MCF 10A (cell line): ENCODE measurements at regions of chr3 and their contacts with region 1.

Region 1: GRCh38 chr3:192816351-192816750 is 89.0 kb upstream of the FGF12 start:
- DNase-seq: peak; percentile 65
- H3K4me3 Mint-ChIP-seq: no peak overlapping the region
- H3K27ac Mint-ChIP-seq: no peak overlapping the region
- H3K4me1 Mint-ChIP-seq: peaks cover 35% of the 10 kb centered on the region
- H3K27me3 Mint-ChIP-seq: no peaks in the 10 kb centered on the region
- CTCF ChIP-seq: peak; percentile 64

Region 2: GRCh38 chr3:192395506-192395905 is 420.8 kb before region 1 on chr3:
- CTCF ChIA-PET with region 1: no interaction called
- POLR2A ChIA-PET with region 1: no interaction called
- intact Hi-C with region 1: no loop called
- DNase-seq: peak; percentile 6
- H3K4me3 Mint-ChIP-seq: no peak overlapping the region
- H3K27ac Mint-ChIP-seq: no peak overlapping the region
- H3K4me1 Mint-ChIP-seq: no peaks in the 10 kb centered on the region
- H3K27me3 Mint-ChIP-seq: no peaks in the 10 kb centered on the region
- CTCF ChIP-seq: no peak

Region 3: GRCh38 chr3:192566706-192567290 is 249.6 kb before region 1 on chr3:
- CTCF ChIA-PET with region 1: interaction called, 27 read pairs
- POLR2A ChIA-PET with region 1: interaction called, 3 read pairs
- intact Hi-C with region 1: no loop called
- DNase-seq: peak; percentile 74
- H3K4me3 Mint-ChIP-seq: no peak overlapping the region
- H3K27ac Mint-ChIP-seq: no peak overlapping the region
- H3K4me1 Mint-ChIP-seq: no peaks in the 10 kb centered on the region
- H3K27me3 Mint-ChIP-seq: peaks cover 37% of the 10 kb centered on the region
- CTCF ChIP-seq: peak; percentile 78

Region 4: GRCh38 chr3:192887047-192887446 is 70.7 kb after region 1 on chr3:
- CTCF ChIA-PET with region 1: interaction called, 13 read pairs
- POLR2A ChIA-PET with region 1: no interaction called
- intact Hi-C with region 1: loop called (anchors 2 kb)
- DNase-seq: peak; percentile 57
- H3K4me3 Mint-ChIP-seq: peak overlapping the region; percentile 47
- H3K27ac Mint-ChIP-seq: peak overlapping the region; percentile 57
- H3K4me1 Mint-ChIP-seq: peaks cover 45% of the 10 kb centered on the region
- H3K27me3 Mint-ChIP-seq: no peaks in the 10 kb centered on the region
- CTCF ChIP-seq: no peak

Region 5: DNA sequence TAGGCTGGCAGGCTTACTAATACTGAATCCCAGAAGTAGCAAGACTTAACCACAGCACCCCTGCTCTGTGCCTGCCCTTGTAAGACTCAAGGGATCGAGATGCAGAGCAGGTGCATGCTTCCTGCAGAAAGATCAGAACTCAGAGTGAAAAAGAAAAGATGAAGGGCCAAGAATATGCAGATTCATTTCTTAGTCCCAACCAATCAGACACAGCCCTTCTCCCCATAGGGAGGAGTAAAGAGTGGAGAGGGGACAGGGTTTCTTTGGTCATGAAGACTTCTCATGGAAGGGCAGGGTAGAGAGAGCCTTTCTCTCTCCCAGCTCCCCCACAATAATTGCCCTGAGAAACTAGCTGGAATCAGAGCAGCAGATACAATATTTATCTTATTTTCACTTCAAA is 206.9 kb after region 1 on chr3:
- CTCF ChIA-PET with region 1: interaction called, 12 read pairs
- POLR2A ChIA-PET with region 1: no interaction called
- intact Hi-C with region 1: no loop called
- DNase-seq: no peak
- H3K4me3 Mint-ChIP-seq: no peak overlapping the region
- H3K27ac Mint-ChIP-seq: no peak overlapping the region
- H3K4me1 Mint-ChIP-seq: no peaks in the 10 kb centered on the region
- H3K27me3 Mint-ChIP-seq: no peaks in the 10 kb centered on the region
- CTCF ChIP-seq: no peak

Region 6: GRCh38 chr3:193078996-193079753 is 262.8 kb after region 1 on chr3:
- CTCF ChIA-PET with region 1: no interaction called
- POLR2A ChIA-PET with region 1: no interaction called
- intact Hi-C with region 1: no loop called
- DNase-seq: no peak
- H3K4me3 Mint-ChIP-seq: no peak overlapping the region
- H3K27ac Mint-ChIP-seq: no peak overlapping the region
- H3K4me1 Mint-ChIP-seq: no peaks in the 10 kb centered on the region
- H3K27me3 Mint-ChIP-seq: peaks cover 39% of the 10 kb centered on the region
- CTCF ChIP-seq: no peak

Region 7: GRCh38 chr3:193129601-193130000 is 313.2 kb after region 1 on chr3:
- CTCF ChIA-PET with region 1: interaction called, 26 read pairs
- POLR2A ChIA-PET with region 1: interaction called, 6 read pairs
- intact Hi-C with region 1: loop called (anchors 5 kb)
- DNase-seq: peak; percentile 34
- H3K4me3 Mint-ChIP-seq: no peak overlapping the region
- H3K27ac Mint-ChIP-seq: no peak overlapping the region
- H3K4me1 Mint-ChIP-seq: peaks cover 7% of the 10 kb centered on the region
- H3K27me3 Mint-ChIP-seq: peaks cover 56% of the 10 kb centered on the region
- CTCF ChIP-seq: no peak

Region 8: GRCh38 chr3:193465992-193466608 is 649.7 kb after region 1 on chr3:
- CTCF ChIA-PET with region 1: interaction called, 37 read pairs
- POLR2A ChIA-PET with region 1: interaction called, 3 read pairs
- intact Hi-C with region 1: loop called (anchors 1 kb)
- DNase-seq: no peak
- H3K4me3 Mint-ChIP-seq: no peak overlapping the region
- H3K27ac Mint-ChIP-seq: no peak overlapping the region
- H3K4me1 Mint-ChIP-seq: no peaks in the 10 kb centered on the region
- H3K27me3 Mint-ChIP-seq: peaks cover 46% of the 10 kb centered on the region
- CTCF ChIP-seq: no peak